Dendritic cell treated with granulocyte-macrophage colony-stimulating factor and Interleukin-4, amounts not matched to agents 40 ng/mL and 50 ng/mL, for 4 days (primary cell): ENCODE measurements at regions of chr12 and their contacts with region 1.

Region 1: GRCh38 chr12:22850185-22850584 is 225.2 kb downstream of the ETNK1 start:
- H3K4me3 Mint-ChIP-seq: no peak overlapping the region
- H3K27ac Mint-ChIP-seq: no peak overlapping the region
- H3K4me1 Mint-ChIP-seq: no peaks in the 10 kb centered on the region
- H3K27me3 Mint-ChIP-seq: no peaks in the 10 kb centered on the region

Region 2: DNA sequence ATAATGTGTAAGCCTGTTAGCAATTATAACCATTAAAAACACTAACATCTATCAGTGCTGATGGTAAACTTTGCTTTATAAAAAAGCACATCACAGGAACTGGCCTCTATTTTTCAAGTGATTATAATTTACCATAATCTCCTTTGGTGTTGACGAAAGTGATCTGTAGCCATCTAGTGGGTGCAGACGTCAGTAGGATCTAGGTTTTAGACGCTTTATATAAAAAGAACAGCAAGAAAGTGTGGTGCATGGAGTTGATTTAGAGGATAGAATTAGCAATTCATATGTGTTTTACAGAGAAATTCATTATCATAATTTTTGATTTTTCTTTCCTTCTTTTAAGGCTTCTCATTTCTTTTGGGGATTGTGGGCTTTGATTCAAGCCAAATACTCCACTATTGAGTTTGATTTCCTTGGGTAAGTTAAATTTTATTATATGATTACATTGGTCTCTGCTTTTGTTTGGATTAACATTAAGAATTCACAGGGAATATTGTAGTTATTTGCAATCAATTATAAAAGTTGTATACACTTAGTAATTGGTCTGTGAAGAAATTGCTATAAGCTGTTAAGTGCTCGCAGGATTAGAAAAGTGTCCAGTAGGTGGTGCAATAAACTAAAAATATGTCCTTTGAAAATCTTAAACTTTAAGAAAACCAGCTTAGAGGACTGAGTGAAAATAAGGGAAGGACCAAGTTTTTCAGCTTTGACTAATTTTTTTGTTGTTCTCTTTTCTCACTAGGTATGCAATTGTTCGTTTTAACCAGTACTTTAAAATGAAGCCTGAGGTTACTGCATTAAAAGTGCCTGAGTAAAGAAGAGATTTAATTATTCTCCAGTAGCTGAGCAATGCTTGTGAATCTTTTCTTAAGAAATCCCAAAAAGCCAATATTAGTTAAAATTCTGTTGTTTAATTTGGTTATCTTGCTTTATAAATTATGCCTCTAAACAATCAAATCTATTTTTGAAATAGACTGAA is 165.8 kb before region 1 on chr12:
- intact Hi-C with region 1: loop called (anchors 5 kb)
- H3K4me3 Mint-ChIP-seq: no peak overlapping the region
- H3K27ac Mint-ChIP-seq: no peak overlapping the region
- H3K4me1 Mint-ChIP-seq: peaks cover 26% of the 10 kb centered on the region
- H3K27me3 Mint-ChIP-seq: no peaks in the 10 kb centered on the region

Region 3: DNA sequence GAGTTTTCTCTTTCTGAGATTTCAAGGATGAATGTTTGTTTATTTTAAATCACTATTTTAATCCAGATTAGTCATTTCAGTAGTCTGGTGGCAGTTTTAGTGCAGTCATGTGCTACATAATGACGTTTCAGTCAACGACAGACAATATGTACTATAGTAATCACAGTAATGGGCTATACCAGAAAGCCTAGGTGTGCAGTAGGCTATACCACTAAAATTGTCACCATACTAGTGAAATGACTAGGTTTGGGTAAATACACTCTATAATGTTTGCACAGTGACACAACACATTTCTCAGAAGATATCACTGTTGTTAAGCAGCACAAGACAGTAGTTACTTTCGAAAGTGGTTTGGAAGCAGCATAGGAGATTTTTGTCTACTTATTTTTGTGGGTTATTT is 22.1 kb before region 1 on chr12:
- intact Hi-C with region 1: no loop called
- H3K4me3 Mint-ChIP-seq: no peak overlapping the region
- H3K27ac Mint-ChIP-seq: no peak overlapping the region
- H3K4me1 Mint-ChIP-seq: no peaks in the 10 kb centered on the region
- H3K27me3 Mint-ChIP-seq: no peaks in the 10 kb centered on the region